ENCODE measurements at regions of chr7 and their contacts with region 1.

Region 1: DNA sequence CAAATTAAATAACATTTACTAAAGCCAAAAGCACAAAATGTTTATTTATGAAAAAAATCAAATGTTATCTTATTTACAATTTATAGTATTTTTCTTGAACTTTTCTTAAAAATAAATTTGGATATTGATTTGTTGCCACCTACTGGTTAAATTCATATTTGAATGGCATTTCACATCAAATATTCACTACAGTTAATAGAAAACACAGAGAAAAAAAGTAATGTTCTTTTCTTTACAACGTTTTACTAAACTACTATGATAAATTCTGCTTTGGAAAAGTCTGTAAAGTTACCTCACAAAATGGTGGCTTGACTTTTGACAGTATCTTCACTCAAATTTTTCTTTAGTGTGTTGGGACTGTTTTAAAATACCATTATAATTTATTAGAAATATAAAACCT is 52.7 kb downstream of the SRPK2 start:
- DNase-seq: no peak
- H3K4me3 ChIP-seq: no peak overlapping the region
- H3K27ac ChIP-seq: peak overlapping the region in 4 of 59 donors; percentile 12 to 29 (median 20)
- H3K27me3 ChIP-seq: no peaks in the 10 kb centered on the region
- CTCF ChIP-seq: peak; percentile 45 to 83 (median 62)

Region 2: GRCh38 chr7:105149827-105150226 is 186.2 kb before region 1 on chr7:
- intact Hi-C with region 1: loop called in 1 of 2 experiments (anchors 5 kb)
- DNase-seq: no peak
- H3K4me3 ChIP-seq: no peak overlapping the region
- H3K27ac ChIP-seq: peak overlapping the region in 4 of 59 donors; percentile 20 to 25 (median 22)
- H3K27me3 ChIP-seq: no peaks in the 10 kb centered on the region
- CTCF ChIP-seq: no peak

Measured in dorsolateral prefrontal cortex (tissue), 120 donors.